Transverse colon (tissue), 4 donors: ENCODE measurements at regions of chr10 and their contacts with region 1.

Region 1: DNA sequence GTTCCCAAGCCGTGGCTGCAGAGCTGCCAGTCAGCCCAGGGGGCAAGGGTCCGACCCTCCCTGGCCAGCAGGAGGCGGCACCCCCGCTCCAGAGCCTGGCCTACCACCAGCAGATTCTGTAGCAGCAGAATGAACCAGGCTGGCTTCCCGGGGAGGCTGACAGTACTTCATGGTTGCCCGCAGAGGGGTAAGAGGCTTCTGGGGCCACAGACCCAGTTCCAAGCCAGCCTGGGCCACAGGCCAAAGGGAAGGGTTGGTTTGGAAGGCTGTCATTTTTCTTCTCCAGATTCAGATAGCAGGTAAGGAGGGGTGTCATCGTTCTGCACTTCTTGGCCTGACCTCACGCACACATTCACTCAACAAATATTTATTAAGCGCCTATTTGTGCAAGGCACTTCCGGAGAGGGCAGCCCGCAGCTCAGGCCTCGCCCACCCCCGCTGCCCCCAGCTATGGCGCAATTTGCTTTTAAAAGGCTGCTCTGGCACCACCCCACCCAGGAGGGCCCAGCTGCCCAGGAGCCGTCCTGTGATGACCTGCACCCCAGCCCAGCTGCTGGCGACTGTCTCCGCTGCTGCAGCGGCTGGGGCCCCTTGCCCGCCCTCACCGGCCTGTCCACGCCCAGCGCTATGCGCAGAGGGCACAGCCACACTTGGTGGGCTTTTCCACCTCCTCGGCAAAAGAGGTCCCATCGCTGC is 168.5 kb downstream of the LCOR start:
- DNase-seq: no peak
- H3K4me3 ChIP-seq: no peak overlapping the region
- H3K27ac ChIP-seq: no peak overlapping the region
- H3K4me1 ChIP-seq: no peaks in the 10 kb centered on the region
- H3K27me3 ChIP-seq: no peaks in the 10 kb centered on the region
- CTCF ChIP-seq: no peak
- EP300 ChIP-seq: no peak
- POLR2A ChIP-seq: no peak

Region 2: GRCh38 chr10:96789571-96790108 is 211.0 kb before region 1 on chr10:
- in situ Hi-C with region 1: no loop called
- intact Hi-C with region 1: loop called (anchors 5 kb)
- DNase-seq: no peak
- H3K4me3 ChIP-seq: no peak overlapping the region
- H3K27ac ChIP-seq: no peak overlapping the region
- H3K4me1 ChIP-seq: peaks cover 0 to 9% (median 0%) of the 10 kb centered on the region in 4 donors
- H3K27me3 ChIP-seq: no peaks in the 10 kb centered on the region
- CTCF ChIP-seq: no peak
- EP300 ChIP-seq: no peak
- POLR2A ChIP-seq: no peak